Activated CD8-positive, alpha-beta T cell treated with anti-CD3 and anti-CD28 coated beads for 36 hours (primary cell): ENCODE measurements at regions of chr1 and their contacts with region 1.

Region 1: DNA sequence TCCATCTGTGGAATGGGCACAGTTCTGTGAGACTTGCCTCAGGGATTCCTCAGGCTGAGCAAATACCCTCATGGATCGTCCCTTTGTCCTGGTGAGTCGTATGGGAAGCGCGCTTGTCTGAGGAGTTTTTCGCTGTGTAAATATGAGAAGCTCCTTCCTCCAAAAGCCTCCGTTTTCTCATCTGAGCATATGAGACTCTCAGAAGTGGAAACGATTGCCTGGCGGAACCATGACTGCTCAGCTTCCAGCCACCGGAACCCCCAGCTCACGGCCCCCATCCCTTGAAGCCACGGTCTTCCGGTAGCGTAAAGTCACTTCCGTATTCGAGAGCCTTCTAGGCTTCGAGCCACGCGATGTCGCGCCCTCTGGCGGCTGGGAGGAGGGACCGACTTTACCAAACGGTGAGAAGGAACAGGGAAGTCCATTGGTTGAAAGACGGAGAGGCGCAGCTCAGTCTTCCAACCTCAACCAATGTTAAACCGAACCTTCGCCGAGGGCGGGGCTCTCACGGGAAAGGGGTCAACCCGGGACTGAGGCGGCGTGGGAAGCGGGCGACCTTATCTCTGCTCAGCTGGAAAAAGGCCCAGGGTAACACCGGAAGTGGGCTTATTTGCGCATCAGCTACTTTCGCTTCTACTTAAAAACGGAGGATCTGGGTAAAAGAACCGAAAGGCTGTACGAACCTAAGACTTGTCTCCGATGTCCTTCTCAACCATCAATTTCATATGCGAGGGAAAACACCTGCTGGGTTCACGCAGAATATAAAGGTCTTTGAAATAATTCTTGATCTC is 46.2 kb downstream of the AZIN2 start:
- DNase-seq: peak; percentile 100
- ATAC-seq: peak; percentile 95
- H3K4me3 Mint-ChIP-seq: peak overlapping the region; percentile 93
- H3K27ac Mint-ChIP-seq: peak overlapping the region; percentile 97
- H3K4me1 Mint-ChIP-seq: peaks cover 41% of the 10 kb centered on the region
- H3K27me3 Mint-ChIP-seq: no peaks in the 10 kb centered on the region
- CTCF ChIP-seq: peak; percentile 79

Region 2: GRCh38 chr1:33065301-33065700 is 61.9 kb before region 1 on chr1:
- CTCF ChIA-PET with region 1: no interaction called
- POLR2A ChIA-PET with region 1: no interaction called
- intact Hi-C with region 1: no loop called
- DNase-seq: no peak
- ATAC-seq: no peak
- H3K4me3 Mint-ChIP-seq: no peak overlapping the region
- H3K27ac Mint-ChIP-seq: no peak overlapping the region
- H3K4me1 Mint-ChIP-seq: no peaks in the 10 kb centered on the region
- H3K27me3 Mint-ChIP-seq: peaks cover 1% of the 10 kb centered on the region
- CTCF ChIP-seq: no peak

Region 3: DNA sequence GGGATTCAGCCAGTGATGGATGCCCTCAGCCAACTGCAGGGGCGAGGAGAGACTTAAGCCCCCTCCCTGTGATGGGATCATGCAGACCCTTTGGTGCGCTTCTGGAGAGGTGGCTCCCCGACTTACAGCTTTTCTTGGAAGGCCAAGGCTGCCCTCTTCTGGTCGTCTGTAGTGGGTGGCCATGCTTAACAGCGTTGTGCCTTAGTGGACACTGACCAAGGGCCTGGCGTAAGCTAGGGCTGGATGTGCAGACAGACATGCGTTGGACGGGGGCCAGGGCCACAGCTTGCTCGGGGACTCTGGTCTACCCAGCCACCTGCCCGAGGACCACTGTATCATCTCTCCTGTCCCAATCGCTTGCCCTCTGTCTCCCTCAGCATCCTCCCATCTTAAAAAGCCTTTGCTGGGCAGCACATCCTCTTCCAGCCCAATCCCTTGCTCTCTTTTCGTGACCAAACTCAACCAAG is 40.8 kb before region 1 on chr1:
- CTCF ChIA-PET with region 1: interaction called, 11 read pairs
- POLR2A ChIA-PET with region 1: interaction called, 11 read pairs
- intact Hi-C with region 1: no loop called
- DNase-seq: peak; percentile 70
- ATAC-seq: no peak
- H3K4me3 Mint-ChIP-seq: no peak overlapping the region
- H3K27ac Mint-ChIP-seq: no peak overlapping the region
- H3K4me1 Mint-ChIP-seq: peaks cover 29% of the 10 kb centered on the region
- H3K27me3 Mint-ChIP-seq: no peaks in the 10 kb centered on the region
- CTCF ChIP-seq: peak; percentile 61

Region 4: DNA sequence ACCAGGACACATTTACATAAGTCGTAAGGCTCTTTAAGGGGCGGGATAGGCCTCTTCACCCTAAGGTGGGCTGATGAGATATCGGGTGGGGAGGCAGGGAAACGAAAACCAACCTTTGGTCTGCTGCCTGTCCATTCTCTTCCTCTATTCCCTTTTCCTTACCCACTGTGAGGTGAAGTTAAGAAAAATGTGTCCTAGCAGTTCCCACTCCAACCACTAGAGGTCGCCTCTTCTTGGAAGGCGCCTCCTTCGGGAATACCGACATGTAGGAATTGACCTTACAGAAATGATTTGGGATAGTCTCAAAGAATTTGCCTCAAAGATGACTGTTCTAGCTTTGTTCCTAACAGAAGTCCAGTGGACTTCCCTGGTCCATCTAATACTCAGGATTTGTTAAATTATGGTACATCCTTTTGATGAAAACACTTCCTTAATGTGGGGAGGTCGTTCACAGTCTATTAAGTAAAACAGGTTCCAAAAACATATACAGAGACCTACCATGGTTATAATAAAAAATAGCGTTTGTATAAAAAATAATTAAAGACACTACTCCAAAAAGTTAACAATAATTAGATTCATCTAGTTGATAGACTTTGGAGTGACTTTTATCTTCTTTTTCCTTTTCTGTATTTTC is 32.1 kb before region 1 on chr1:
- CTCF ChIA-PET with region 1: interaction called, 21 read pairs
- POLR2A ChIA-PET with region 1: interaction called, 6 read pairs
- intact Hi-C with region 1: loop called (anchors 2 kb)
- DNase-seq: no peak
- ATAC-seq: no peak
- H3K4me3 Mint-ChIP-seq: no peak overlapping the region
- H3K27ac Mint-ChIP-seq: no peak overlapping the region
- H3K4me1 Mint-ChIP-seq: peaks cover 36% of the 10 kb centered on the region
- H3K27me3 Mint-ChIP-seq: no peaks in the 10 kb centered on the region
- CTCF ChIP-seq: peak; percentile 100

Region 5: DNA sequence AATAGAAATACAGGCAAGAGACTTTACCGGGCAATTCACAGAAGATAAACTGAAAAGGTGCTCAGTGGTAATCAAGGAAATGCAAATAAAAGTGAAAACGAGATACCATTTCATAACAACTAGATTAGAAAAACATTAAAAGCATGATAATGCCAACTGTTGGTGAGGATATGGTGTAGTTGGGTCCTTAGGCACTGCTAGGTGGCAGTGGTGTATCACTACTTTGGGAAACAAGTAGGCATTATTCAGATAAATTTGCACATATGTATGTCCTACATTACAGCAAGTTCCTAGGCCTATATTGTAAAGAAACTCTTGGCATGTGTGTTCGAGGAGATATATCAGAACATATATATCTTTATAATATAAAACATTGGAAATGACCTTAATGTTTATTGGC is 15.2 kb before region 1 on chr1:
- CTCF ChIA-PET with region 1: interaction called, 16 read pairs
- POLR2A ChIA-PET with region 1: interaction called, 13 read pairs
- intact Hi-C with region 1: no loop called
- DNase-seq: no peak
- ATAC-seq: peak; percentile 58
- H3K4me3 Mint-ChIP-seq: no peak overlapping the region
- H3K27ac Mint-ChIP-seq: no peak overlapping the region
- H3K4me1 Mint-ChIP-seq: no peaks in the 10 kb centered on the region
- H3K27me3 Mint-ChIP-seq: no peaks in the 10 kb centered on the region
- CTCF ChIP-seq: peak; percentile 33

Region 6: DNA sequence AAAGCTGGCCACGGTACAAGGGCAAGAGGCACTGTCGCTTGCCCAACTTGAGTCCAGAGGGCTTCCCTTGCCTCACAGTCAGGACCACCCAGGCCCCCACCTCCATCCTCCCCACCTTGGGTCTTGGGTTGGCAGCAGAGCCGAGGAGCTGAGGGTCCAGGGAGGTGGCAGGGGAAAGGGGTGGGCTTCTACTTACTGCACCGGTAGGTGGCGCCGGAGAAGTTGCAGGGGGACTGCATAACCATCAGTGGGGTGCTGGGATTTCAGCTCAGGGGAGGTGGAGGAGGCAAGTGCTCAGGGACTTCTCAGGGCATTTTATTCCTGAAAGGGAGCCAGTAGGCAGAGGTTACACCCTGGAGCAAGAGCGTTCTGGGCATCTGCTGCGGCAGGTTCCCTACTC is 10.6 kb after region 1 on chr1:
- CTCF ChIA-PET with region 1: interaction called, 11 read pairs
- POLR2A ChIA-PET with region 1: interaction called, 6 read pairs
- intact Hi-C with region 1: no loop called
- DNase-seq: peak; percentile 70
- ATAC-seq: peak; percentile 73
- H3K4me3 Mint-ChIP-seq: no peak overlapping the region
- H3K27ac Mint-ChIP-seq: no peak overlapping the region
- H3K4me1 Mint-ChIP-seq: peaks cover 8% of the 10 kb centered on the region
- H3K27me3 Mint-ChIP-seq: no peaks in the 10 kb centered on the region
- CTCF ChIP-seq: peak; percentile 62

Region 7: GRCh38 chr1:33181921-33182341 is 54.7 kb after region 1 on chr1 and contains the start of gene TRIM62:
- CTCF ChIA-PET with region 1: interaction called, 11 read pairs
- POLR2A ChIA-PET with region 1: interaction called, 6 read pairs
- intact Hi-C with region 1: no loop called
- DNase-seq: peak; percentile 80
- ATAC-seq: peak; percentile 49
- H3K4me3 Mint-ChIP-seq: peak within 1 kb of the TSS; percentile 82
- H3K27ac Mint-ChIP-seq: peak within 1 kb of the TSS; percentile 22
- H3K4me1 Mint-ChIP-seq: peaks cover 21% of the 10 kb centered on the region
- H3K27me3 Mint-ChIP-seq: peaks cover 9% of the 10 kb centered on the region
- CTCF ChIP-seq: no peak
- total RNA-seq, gene TRIM62: 3.8 to 5.2 TPM

Region 8: GRCh38 chr1:33472349-33472980 is 345.3 kb after region 1 on chr1 and contains the start of gene ZSCAN20:
- CTCF ChIA-PET with region 1: interaction called, 12 read pairs
- POLR2A ChIA-PET with region 1: interaction called, 3 read pairs
- intact Hi-C with region 1: no loop called
- DNase-seq: peak; percentile 96
- ATAC-seq: peak; percentile 95
- H3K4me3 Mint-ChIP-seq: peak within 1 kb of the TSS; percentile 72
- H3K27ac Mint-ChIP-seq: peak within 1 kb of the TSS; percentile 82
- H3K4me1 Mint-ChIP-seq: peaks cover 18% of the 10 kb centered on the region
- H3K27me3 Mint-ChIP-seq: no peaks in the 10 kb centered on the region
- CTCF ChIP-seq: no peak
- total RNA-seq, gene ZSCAN20: 2.6 to 3.2 TPM